HEK293 (cell line): ENCODE measurements at regions of chr13 and their contacts with region 1.

Region 1: GRCh38 chr13:31909864-31910551 is 121.6 kb upstream of the FRY start:
- H3K4me3 ChIP-seq: no peak overlapping the region
- H3K27ac ChIP-seq: no peak overlapping the region
- H3K4me1 ChIP-seq: no peaks in the 10 kb centered on the region
- CTCF ChIP-seq: no peak

Region 2: GRCh38 chr13:31896427-31896826 is 13.6 kb before region 1 on chr13:
- CTCF ChIA-PET with region 1: interaction called, 18 read pairs
- POLR2A ChIA-PET with region 1: no interaction called
- H3K4me3 ChIP-seq: no peak overlapping the region
- H3K27ac ChIP-seq: no peak overlapping the region
- H3K4me1 ChIP-seq: peaks cover 12% of the 10 kb centered on the region
- CTCF ChIP-seq: no peak

Region 3: GRCh38 chr13:31930901-31931522 is 21.0 kb after region 1 on chr13:
- CTCF ChIA-PET with region 1: interaction called, 15 read pairs
- POLR2A ChIA-PET with region 1: no interaction called
- H3K4me3 ChIP-seq: no peak overlapping the region
- H3K27ac ChIP-seq: no peak overlapping the region
- H3K4me1 ChIP-seq: no peaks in the 10 kb centered on the region
- CTCF ChIP-seq: no peak

Region 4: GRCh38 chr13:31945202-31945978 is 35.4 kb after region 1 on chr13:
- CTCF ChIA-PET with region 1: interaction called, 10 read pairs
- POLR2A ChIA-PET with region 1: interaction called, 3 read pairs
- H3K4me3 ChIP-seq: peak overlapping the region; percentile 26
- H3K27ac ChIP-seq: no peak overlapping the region
- H3K4me1 ChIP-seq: peaks cover 7% of the 10 kb centered on the region
- CTCF ChIP-seq: no peak

Region 5: GRCh38 chr13:32581177-32581786 is 671.3 kb after region 1 on chr13:
- CTCF ChIA-PET with region 1: interaction called, 22 read pairs
- POLR2A ChIA-PET with region 1: interaction called, 3 read pairs
- H3K4me3 ChIP-seq: no peak overlapping the region
- H3K27ac ChIP-seq: no peak overlapping the region
- H3K4me1 ChIP-seq: no peaks in the 10 kb centered on the region
- CTCF ChIP-seq: no peak